Esophagus squamous epithelium (tissue), 5 donors: ENCODE measurements at regions of chr18 and their contacts with region 1.

Region 1: DNA sequence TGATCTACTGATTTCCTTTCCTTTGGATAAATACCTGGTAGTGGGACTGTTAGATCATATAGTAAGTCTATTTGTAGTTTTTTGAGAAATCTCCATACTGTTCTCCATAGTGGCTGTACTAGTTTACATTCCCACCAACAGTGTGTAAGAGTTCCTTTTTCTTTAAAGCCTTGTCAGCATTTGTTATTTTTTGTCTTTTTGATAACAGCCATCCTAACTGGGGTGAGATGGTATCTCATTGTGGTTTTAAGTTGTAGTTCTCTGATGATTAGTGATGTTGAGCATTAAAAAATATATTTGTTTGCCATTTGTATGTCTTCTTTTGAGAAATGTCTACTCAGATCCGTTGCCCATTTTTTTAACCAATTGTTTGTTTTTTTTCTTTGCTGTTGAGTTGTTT is 33.9 kb upstream of the EPG5 start:
- DNase-seq: no peak
- H3K4me3 ChIP-seq: no peak overlapping the region
- H3K27ac ChIP-seq: no peak overlapping the region
- H3K4me1 ChIP-seq: no peaks in the 10 kb centered on the region
- H3K27me3 ChIP-seq: no peaks in the 10 kb centered on the region
- CTCF ChIP-seq: no peak
- POLR2A ChIP-seq: no peak

Region 2: GRCh38 chr18:44887227-44887631 is 1113.8 kb before region 1 on chr18:
- intact Hi-C with region 1: no loop called
- DNase-seq: no peak
- H3K4me3 ChIP-seq: no peak overlapping the region
- H3K27ac ChIP-seq: peak overlapping the region in 1 of 4 donors; percentile 31
- H3K4me1 ChIP-seq: peaks cover 0 to 15% (median 12%) of the 10 kb centered on the region in 3 donors
- H3K27me3 ChIP-seq: no peaks in the 10 kb centered on the region
- CTCF ChIP-seq: peak in 1 of 6 experiments; percentile 29
- POLR2A ChIP-seq: no peak

Region 3: GRCh38 chr18:45745817-45746461 is 255.1 kb before region 1 on chr18:
- intact Hi-C with region 1: no loop called
- DNase-seq: no peak
- H3K4me3 ChIP-seq: no peak overlapping the region
- H3K27ac ChIP-seq: no peak overlapping the region
- H3K4me1 ChIP-seq: peaks cover 0 to 7% (median 0%) of the 10 kb centered on the region in 3 donors
- H3K27me3 ChIP-seq: peaks cover 0 to 88% (median 4%) of the 10 kb centered on the region in 4 donors
- CTCF ChIP-seq: no peak
- POLR2A ChIP-seq: no peak

Region 4: DNA sequence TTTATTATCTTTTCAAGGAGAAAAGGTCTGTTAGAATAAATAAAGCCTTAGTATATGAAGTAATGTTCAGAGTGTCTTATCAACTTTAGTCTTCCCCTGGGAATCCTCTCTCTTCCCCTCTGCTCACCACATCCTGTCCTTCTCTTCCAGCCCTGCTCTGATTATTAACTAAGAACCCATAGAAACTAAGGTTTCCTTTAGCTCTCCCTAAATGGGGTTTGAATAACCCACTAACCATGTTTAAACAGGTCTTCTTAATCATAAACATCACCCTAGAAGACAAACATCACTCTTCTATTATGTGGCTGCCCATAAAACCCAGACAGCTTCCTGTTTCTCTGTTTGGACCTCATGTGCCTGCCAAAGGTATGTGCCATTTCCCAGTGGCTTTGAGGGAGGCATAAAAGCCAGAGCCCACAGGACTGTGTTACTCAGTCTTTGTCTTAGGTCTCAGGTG is 227.0 kb before region 1 on chr18:
- intact Hi-C with region 1: loop called (anchors 5 kb)
- DNase-seq: no peak
- H3K4me3 ChIP-seq: no peak overlapping the region
- H3K27ac ChIP-seq: no peak overlapping the region
- H3K4me1 ChIP-seq: peaks cover 0 to 18% (median 6%) of the 10 kb centered on the region in 3 donors
- H3K27me3 ChIP-seq: peaks cover 0 to 100% (median 1%) of the 10 kb centered on the region in 4 donors
- CTCF ChIP-seq: no peak
- POLR2A ChIP-seq: no peak